Heart right ventricle (tissue), 16 donors: ENCODE measurements at regions of chr11 and their contacts with region 1.

Region 1: DNA sequence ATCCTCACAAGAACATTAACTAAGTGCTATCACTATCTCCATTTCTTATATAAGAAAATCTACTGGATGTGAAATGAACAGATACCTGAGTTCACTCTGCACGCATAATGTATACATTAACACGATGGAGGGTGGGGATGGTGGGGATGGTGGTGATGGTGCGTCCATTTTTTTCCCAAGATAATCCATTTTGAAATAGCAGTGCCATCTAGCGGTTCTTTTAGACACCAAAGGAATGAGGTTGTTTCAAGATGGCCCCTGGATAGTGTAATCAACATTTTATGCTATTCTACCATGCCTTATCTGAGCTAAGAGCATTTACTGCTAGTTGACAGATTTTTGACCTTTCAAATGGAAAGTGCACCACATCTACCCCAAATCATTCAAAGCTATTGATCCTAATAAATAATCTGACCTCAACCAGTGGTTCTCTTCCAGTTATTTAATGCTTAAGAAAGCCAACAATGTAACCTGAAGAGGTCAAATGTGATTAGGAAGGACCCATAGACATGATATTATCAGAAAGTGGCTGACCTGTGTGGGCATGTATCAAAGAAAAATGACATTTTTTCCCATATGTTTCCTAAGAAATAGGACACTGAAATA is 714.7 kb upstream of the TENM4 start:
- DNase-seq: no peak
- ATAC-seq: peak in 1 of 8 donors; percentile 22
- H3K4me3 ChIP-seq: no peak overlapping the region
- H3K27ac ChIP-seq: no peak overlapping the region
- H3K4me1 ChIP-seq: no peaks in the 10 kb centered on the region
- H3K27me3 ChIP-seq: no peaks in the 10 kb centered on the region
- CTCF ChIP-seq: peak in 8 of 9 donors; percentile 20 to 62 (median 47)

Region 2: DNA sequence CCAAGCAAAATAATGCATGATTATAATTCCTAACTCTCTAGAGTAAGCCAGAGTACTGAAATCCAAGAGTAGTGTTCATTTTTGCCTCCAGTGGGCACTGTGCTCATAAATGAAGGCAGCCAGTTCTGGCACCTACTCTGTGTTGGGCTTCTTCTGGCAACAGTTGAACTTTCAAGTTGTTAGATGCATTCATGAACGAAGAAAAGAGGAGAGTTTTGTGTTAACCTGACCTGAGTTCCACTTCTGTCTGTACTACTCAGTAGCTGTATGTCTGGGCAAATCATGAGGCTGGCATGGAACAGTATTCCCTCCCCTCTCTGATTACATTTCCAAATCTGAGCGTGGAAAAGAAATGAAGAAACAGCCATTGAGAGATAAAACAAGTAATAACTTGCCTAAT is 694.4 kb before region 1 on chr11:
- intact Hi-C with region 1: loop called in 1 of 10 experiments (anchors 10 kb)
- DNase-seq: peak in 1 of 2 donors; percentile 27
- ATAC-seq: peak in 7 of 8 donors; percentile 52 to 81 (median 69)
- H3K4me3 ChIP-seq: no peak overlapping the region
- H3K27ac ChIP-seq: no peak overlapping the region
- H3K4me1 ChIP-seq: no peaks in the 10 kb centered on the region
- H3K27me3 ChIP-seq: peaks cover 0 to 14% (median 6%) of the 10 kb centered on the region in 7 donors
- CTCF ChIP-seq: peak in 8 of 9 donors; percentile 15 to 65 (median 54)

Region 3: GRCh38 chr11:79708300-79708932 is 447.1 kb before region 1 on chr11:
- intact Hi-C with region 1: loop called in 1 of 10 experiments (anchors 10 kb)
- DNase-seq: peak in 1 of 2 donors; percentile 5
- ATAC-seq: no peak
- H3K4me3 ChIP-seq: no peak overlapping the region
- H3K27ac ChIP-seq: no peak overlapping the region
- H3K4me1 ChIP-seq: no peaks in the 10 kb centered on the region
- H3K27me3 ChIP-seq: no peaks in the 10 kb centered on the region
- CTCF ChIP-seq: peak in 8 of 9 donors; percentile 15 to 48 (median 34)

Region 4: DNA sequence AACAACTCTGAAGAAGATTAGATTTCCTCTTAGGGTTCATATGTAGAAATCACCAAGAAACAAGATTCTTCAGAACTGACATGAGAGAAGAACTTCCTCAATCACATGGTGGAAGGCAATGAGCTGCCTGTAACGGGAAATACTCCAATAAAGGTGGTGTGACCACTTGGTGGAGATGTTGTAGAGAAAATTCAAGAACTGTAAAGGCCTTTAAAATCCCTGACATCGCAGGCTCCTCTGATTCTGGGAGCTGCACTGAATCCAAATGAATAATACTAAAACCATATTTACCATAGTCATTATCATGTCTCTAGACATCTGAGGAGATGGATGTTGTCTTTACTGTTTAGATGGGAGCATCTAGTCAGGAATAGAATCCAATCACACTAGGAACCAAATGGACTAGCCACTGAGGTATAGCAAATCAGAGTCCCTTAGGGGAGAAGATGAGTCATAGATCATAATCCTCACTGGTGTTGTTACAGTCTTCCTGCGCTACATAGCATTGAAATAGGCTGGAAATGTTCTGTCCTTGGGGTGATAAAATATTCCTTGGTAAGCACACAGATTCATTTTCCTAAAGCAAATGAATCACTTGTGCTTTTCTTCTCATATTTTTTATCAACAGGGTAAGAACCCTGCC is 393.1 kb before region 1 on chr11:
- intact Hi-C with region 1: loop called in 8 of 10 experiments (anchors 2 to 10 kb)
- DNase-seq: peak in 1 of 2 donors; percentile 5
- ATAC-seq: peak in 1 of 8 donors; percentile 58
- H3K4me3 ChIP-seq: no peak overlapping the region
- H3K27ac ChIP-seq: no peak overlapping the region
- H3K4me1 ChIP-seq: peaks cover 0 to 5% (median 0%) of the 10 kb centered on the region in 9 donors
- H3K27me3 ChIP-seq: no peaks in the 10 kb centered on the region
- CTCF ChIP-seq: peak in 6 of 9 donors; percentile 9 to 49 (median 38)